HepG2 (cell line): ENCODE measurements at regions of chr7 and their contacts with region 1.

Region 1: DNA sequence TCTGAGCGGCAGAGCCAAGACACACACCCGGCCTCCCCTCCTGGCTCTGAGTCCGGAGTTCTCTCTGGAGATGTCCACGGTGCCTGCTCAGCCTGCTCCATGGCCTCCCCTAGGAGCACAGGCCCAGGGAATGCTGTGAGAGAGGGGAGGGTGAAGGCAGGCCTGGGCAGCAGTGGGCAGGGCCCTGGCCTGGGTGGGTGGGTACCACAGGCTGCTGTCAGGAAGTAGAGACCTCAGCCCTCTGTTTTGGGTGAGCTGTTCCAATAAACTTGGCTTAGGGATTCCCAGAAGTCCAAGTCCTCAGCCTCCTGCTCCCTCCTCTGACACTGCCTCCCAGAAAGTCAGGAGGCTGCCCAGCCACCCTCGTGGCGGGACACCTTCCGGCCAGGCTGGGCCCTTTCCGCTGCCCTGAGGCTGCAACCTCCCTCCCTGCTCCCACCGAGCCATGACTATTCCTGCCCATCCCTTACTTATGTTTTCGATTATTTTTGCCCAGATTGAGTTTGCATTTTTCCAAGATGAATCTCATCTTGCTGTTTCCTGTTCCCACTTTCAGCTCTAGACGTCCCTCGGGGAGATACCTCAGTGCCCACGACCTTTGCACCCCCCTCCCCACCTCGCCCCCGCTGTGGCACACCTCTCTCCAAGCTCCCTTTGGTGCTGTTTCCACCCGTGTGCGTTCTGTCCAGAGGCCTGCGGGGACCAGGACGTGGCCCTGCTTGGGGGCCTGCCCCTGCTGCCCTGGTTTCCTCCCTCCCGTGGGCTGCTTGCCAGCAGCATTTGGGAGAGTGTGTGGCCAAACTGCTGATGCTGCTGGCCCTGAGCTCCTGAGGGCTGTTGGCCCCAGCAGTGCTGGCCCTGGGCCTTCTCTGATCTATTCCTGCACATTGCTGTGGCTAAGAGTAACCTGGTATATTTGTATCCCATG is 5.8 kb upstream of the POLM start:
- DNase-seq: no peak
- ATAC-seq: peak; percentile 82
- H3K4me3 ChIP-seq: peak overlapping the region; percentile 36 to 68 (median 42)
- H3K27ac ChIP-seq: no peak overlapping the region
- H3K4me1 ChIP-seq: peaks cover 40% of the 10 kb centered on the region
- H3K27me3 ChIP-seq: peaks cover 0 to 14% of the 10 kb centered on the region in 2 experiments; a peak in 2 of 5 replicates
- CTCF ChIP-seq: no peak
- EP300 ChIP-seq: no peak
- POLR2A ChIP-seq: 0 out of 4 replicates have a peak, but pooled peaks of 1 of the 2 experiments have one; percentile 21
- RAD21 ChIP-seq: no peak

Region 2: GRCh38 chr7:44072364-44073231 is 15.6 kb before region 1 on chr7:
- CTCF ChIA-PET with region 1: no interaction called
- POLR2A ChIA-PET with region 1: no interaction called
- in situ Hi-C with region 1: no loop called
- intact Hi-C with region 1: loop called (anchors 1 kb)
- DNase-seq: peak; percentile 76
- ATAC-seq: peak; percentile 81
- H3K4me3 ChIP-seq: peak overlapping the region in 1 of 3 experiments; percentile 46; a peak in 1 of 6 replicates
- H3K27ac ChIP-seq: peak overlapping the region; percentile 54
- H3K4me1 ChIP-seq: peaks cover 34% of the 10 kb centered on the region
- H3K27me3 ChIP-seq: no peaks in the 10 kb centered on the region
- CTCF ChIP-seq: peak; percentile 62
- EP300 ChIP-seq: no peak
- POLR2A ChIP-seq: no peak
- RAD21 ChIP-seq: peak; percentile 66

Region 3: GRCh38 chr7:44463169-44463808 is 375.1 kb after region 1 on chr7:
- CTCF ChIA-PET with region 1: no interaction called
- POLR2A ChIA-PET with region 1: no interaction called
- in situ Hi-C with region 1: no loop called
- intact Hi-C with region 1: no loop called
- DNase-seq: no peak
- ATAC-seq: no peak
- H3K4me3 ChIP-seq: no peak overlapping the region
- H3K27ac ChIP-seq: no peak overlapping the region
- H3K4me1 ChIP-seq: peaks cover 12% of the 10 kb centered on the region
- H3K27me3 ChIP-seq: no peaks in the 10 kb centered on the region
- CTCF ChIP-seq: no peak
- EP300 ChIP-seq: no peak
- POLR2A ChIP-seq: no peak
- RAD21 ChIP-seq: no peak